Activated T-helper 1 cell treated with anti-CD3 and anti-CD28 coated beads, Interleukin-12 subunit alpha, Interleukin-12 subunit beta, Interleukin-2, Interleukin-4 antibody, amounts not matched to agents 30 ng/mL and 10 ng/mL and 1 ng/mL, durations not matched to agents 14 hours and 24 hours and 36 hours (primary cell): ENCODE measurements at regions of chr1 and their contacts with region 1.

Region 1: DNA sequence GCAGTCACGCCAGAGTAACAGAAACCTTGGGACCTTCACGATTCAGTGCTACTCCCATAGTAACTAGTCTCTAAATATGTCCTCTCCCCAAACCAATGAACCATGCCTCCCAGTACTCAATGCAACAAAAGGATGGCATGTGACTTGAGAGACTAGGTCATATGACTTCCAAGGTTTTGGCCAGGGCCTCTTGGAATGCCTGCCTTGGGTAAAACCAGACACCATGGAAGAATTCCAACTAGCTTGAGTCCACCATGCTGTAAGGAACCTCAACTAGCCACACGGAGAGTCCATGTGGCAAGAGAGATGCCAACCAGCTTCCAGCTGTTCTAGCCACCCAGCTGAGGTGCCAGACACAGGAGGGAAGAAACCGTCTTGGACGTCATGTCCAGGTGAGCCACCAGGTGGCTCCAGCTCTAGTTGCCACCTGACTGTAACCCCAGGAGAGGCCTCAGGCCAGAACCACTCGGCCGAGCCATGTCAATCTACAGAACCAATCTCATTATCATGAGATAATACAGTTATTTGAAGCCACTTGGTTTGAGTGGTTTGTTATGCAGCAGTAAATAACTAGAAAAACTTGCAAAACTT is 115.0 kb downstream of the SYF2 start:
- DNase-seq: no peak
- H3K4me3 Mint-ChIP-seq: no peak overlapping the region
- H3K27ac Mint-ChIP-seq: no peak overlapping the region
- H3K4me1 Mint-ChIP-seq: peaks cover 23% of the 10 kb centered on the region
- H3K27me3 Mint-ChIP-seq: peaks cover 18% of the 10 kb centered on the region

Region 2: DNA sequence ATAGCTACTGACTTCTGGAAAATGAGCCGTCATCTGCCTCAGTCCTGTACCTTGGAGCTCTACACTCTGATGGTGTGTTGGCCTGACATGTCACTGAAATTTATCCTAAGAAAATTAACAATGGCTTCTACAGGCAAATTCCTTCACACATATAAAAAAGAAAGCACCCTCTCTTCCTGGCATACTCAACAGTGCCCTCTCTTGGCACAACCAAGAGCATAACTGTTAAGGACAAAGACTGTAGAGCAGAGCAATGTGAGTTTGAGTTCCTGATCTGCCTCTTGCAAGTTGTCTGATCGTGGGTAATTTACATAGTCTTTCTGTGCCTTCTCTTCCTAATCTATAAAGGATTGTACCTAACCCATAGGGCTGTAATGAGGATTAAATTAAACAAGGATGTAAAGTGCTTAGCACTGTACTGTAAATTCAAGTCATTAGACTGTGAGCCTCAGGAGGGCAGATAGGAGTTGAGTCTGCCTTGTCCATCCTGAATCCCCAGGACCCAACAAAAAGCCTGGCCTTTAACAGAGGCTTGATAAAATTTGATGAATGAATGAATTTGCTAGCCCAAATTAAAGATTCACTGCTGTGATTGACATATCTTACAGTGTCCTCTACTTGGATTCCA is 31.5 kb after region 1 on chr1:
- intact Hi-C with region 1: loop called (anchors 1 kb)
- DNase-seq: peak; percentile 29
- H3K4me3 Mint-ChIP-seq: no peak overlapping the region
- H3K27ac Mint-ChIP-seq: no peak overlapping the region
- H3K4me1 Mint-ChIP-seq: peaks cover 9% of the 10 kb centered on the region
- H3K27me3 Mint-ChIP-seq: peaks cover 38% of the 10 kb centered on the region